Activated CD4-positive, alpha-beta T cell treated with anti-CD3 and anti-CD28 coated beads, Interleukin-2, amount 10 ng/mL, durations not matched to agents 24 days and 14 days (primary cell): ENCODE measurements at regions of chr6 and their contacts with region 1.

Region 1: GRCh38 chr6:31729515-31729978 is 448 bp upstream of the DDAH2 start:
- DNase-seq: peak; percentile 93
- H3K4me3 Mint-ChIP-seq: peak overlapping the region; percentile 97
- H3K27ac Mint-ChIP-seq: peak overlapping the region; percentile 74
- H3K4me1 Mint-ChIP-seq: peaks cover 64% of the 10 kb centered on the region
- H3K27me3 Mint-ChIP-seq: no peaks in the 10 kb centered on the region

Region 2: GRCh38 chr6:31702819-31703522 is 26.6 kb before region 1 on chr6 and contains the start of gene ABHD16A:
- intact Hi-C with region 1: loop called (anchors 2 kb)
- DNase-seq: peak; percentile 99
- H3K4me3 Mint-ChIP-seq: peak within 1 kb of the TSS; percentile 98
- H3K27ac Mint-ChIP-seq: peak within 1 kb of the TSS; percentile 99
- H3K4me1 Mint-ChIP-seq: peaks cover 24% of the 10 kb centered on the region
- H3K27me3 Mint-ChIP-seq: no peaks in the 10 kb centered on the region
- total RNA-seq, gene ABHD16A: 43.1 and 44.7 TPM in 2 replicates

Region 3: GRCh38 chr6:31758281-31758680 is 28.7 kb after region 1 on chr6:
- intact Hi-C with region 1: no loop called
- DNase-seq: no peak
- H3K4me3 Mint-ChIP-seq: no peak overlapping the region
- H3K27ac Mint-ChIP-seq: peak overlapping the region; percentile 1
- H3K4me1 Mint-ChIP-seq: no peaks in the 10 kb centered on the region
- H3K27me3 Mint-ChIP-seq: no peaks in the 10 kb centered on the region

Region 4: DNA sequence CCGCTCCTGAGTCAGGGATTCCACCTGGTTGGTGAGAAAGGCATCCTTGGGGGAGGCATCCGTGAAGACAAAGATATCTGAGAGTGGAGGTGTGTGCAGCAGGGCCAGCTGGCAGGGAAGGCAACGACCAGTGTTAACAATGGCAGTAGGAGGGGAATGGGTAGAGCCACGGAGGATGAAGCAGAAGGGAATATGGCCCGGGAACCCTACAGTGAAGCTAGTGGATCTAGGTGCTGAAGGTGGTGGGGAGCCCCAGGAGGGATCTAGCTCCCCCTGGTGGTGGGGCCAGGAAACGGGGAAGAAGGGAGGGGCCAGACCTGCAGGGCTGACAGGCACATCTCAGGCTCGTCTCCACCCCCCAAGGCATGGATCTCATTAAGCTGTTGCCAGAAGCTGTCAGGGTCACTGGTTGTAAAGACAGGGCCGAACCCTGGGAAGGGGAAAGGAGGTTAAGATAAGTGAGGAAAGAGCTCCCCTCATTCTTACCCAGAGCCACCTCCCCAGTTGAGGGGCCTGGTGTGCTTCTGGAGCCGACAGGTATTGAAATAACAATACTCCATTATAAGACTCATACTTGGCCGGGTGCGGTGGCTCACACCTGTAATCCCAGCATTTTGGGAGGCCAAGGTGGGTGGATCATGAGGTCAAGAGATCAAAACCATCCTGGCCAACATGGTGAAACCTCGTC is 40.3 kb after region 1 on chr6:
- intact Hi-C with region 1: loop called (anchors 2 kb)
- DNase-seq: peak; percentile 96
- H3K4me3 Mint-ChIP-seq: no peak overlapping the region
- H3K27ac Mint-ChIP-seq: peak overlapping the region; percentile 46
- H3K4me1 Mint-ChIP-seq: peaks cover 24% of the 10 kb centered on the region
- H3K27me3 Mint-ChIP-seq: no peaks in the 10 kb centered on the region